IMR-90 (cell line): ENCODE measurements at regions of chr10 and their contacts with region 1.

Region 1: DNA sequence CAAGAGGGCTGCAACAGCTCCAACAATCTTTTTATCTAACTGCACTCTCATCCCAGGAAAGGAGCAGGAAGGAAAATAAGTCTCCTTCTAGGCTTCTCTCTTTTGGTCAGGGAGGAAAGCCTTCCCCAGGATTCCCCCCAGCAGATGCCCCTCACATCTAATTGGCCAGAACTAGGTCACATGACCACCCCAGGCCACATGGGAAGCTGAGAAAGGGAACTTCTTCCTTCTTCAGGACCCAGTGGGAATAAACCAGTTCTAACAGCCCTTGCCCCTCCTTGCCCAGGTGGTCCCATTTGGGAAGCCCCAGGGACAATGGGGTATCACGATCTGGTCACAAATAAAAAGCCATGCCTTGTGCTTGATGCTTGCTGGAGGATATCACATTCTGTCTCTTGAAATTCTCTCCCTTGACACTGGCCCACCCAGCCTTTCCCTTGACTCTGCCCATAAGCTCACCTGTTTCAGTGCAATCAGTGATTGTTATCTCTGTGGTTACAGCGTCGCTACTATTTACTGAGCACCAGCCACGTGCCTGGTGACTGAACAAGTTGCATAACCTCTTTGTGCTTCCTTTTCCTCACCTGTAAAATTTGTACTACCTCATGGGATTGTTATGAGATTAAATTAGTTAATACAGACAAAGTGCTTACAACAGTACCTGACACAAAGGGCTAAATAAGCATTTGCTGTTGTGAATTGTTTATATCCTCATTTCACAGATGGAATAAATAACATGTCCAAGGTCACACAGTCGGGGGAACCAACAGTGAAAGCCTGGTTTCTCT is 9.0 kb upstream of the TACR2 start:
- DNase-seq: no peak
- ATAC-seq: no peak
- H3K4me3 ChIP-seq: no peak overlapping the region
- H3K27ac ChIP-seq: no peak overlapping the region
- H3K4me1 ChIP-seq: peaks cover 5% of the 10 kb centered on the region; the same call in 1 of the 2 replicates
- H3K27me3 ChIP-seq: peaks cover 28% of the 10 kb centered on the region
- CTCF ChIP-seq: no peak
- POLR2A ChIP-seq: no peak
- RAD21 ChIP-seq: no peak

Region 2: DNA sequence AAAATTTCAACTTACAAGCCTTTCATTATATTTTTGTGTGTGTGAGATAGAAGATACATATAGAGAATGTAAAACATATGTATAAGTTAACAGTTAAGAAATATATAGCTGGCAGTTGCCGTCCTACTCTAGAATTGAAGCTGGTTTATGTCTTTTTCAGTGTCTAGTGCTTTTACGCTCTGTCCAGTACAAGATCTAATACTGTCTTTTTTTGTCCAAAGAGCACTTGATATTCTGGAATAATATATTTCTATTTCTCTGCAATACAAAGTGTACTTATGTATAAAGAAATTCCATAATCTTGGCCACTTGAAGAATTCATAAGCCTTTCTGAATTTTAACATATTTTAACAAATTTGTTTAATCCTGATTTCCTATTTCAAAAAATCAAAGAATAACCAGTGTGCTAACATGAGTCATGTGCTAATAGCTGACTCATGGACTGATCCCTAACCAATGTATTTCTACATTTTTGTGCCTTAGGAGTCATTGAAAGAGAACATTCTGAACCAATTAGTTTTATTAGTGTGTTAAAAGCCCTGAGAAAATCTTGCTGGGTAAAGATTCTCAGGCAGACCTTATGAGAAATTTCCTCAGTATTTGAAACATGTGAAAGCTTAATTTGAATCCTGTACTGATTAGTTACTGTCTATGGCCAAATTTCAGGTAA is 777.9 kb before region 1 on chr10:
- CTCF ChIA-PET with region 1: no interaction called
- POLR2A ChIA-PET with region 1: no interaction called
- dilution Hi-C with region 1: no loop called
- in situ Hi-C with region 1: no loop called
- intact Hi-C with region 1: no loop called
- DNase-seq: peak; percentile 89
- ATAC-seq: peak; percentile 95
- H3K4me3 ChIP-seq: no peak overlapping the region
- H3K27ac ChIP-seq: 0 out of 2 replicates have a peak overlapping the region, but pooled peaks have one; percentile 55
- H3K4me1 ChIP-seq: peaks cover 2% of the 10 kb centered on the region; the same call in 1 of the 2 replicates
- H3K27me3 ChIP-seq: no peaks in the 10 kb centered on the region
- CTCF ChIP-seq: no peak
- POLR2A ChIP-seq: no peak
- RAD21 ChIP-seq: no peak

Region 3: DNA sequence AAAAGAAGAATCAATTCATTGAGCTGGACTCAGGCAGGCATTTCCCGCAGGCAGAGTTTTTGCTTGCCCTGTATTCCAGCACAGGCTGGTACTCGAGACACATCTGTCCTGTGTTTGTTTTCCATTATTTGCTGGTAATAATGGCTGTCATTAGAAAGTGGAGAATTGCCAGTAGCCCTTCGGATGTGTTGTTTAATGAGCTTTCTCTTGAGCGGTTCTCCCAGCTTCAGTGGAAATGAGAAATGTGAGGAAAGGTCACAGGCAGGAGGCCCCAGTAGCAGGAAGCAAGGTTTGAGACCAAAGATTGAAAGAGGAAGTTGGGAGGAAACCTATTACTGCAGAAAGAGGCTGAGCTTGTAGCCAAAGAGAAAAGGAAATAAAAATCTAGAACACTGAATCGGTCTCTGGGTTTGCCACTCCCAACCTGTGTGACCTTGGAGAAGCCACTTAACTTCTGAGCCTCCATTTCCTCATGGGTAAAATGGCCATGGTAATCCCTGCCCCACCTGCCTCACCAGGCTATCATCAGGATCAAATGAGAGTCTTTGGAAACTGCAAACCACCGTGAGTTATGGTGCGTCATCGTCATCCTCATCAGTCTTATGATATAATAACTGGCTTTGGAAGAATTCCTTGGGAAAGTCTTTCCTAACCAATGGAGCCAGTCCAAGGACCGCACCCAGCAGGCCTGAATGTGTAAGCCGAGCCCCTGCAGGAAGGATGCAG is 76.7 kb before region 1 on chr10:
- CTCF ChIA-PET with region 1: no interaction called
- POLR2A ChIA-PET with region 1: interaction called, 14 read pairs
- dilution Hi-C with region 1: no loop called
- in situ Hi-C with region 1: no loop called
- intact Hi-C with region 1: no loop called
- DNase-seq: peak; percentile 94
- ATAC-seq: peak; percentile 78
- H3K4me3 ChIP-seq: no peak overlapping the region
- H3K27ac ChIP-seq: no peak overlapping the region
- H3K4me1 ChIP-seq: peaks cover 19% of the 10 kb centered on the region
- H3K27me3 ChIP-seq: no peaks in the 10 kb centered on the region
- CTCF ChIP-seq: no peak
- POLR2A ChIP-seq: no peak
- RAD21 ChIP-seq: no peak

Region 4: GRCh38 chr10:69506834-69507721 is 81.4 kb after region 1 on chr10:
- CTCF ChIA-PET with region 1: interaction called, 3 read pairs
- POLR2A ChIA-PET with region 1: no interaction called
- dilution Hi-C with region 1: no loop called
- in situ Hi-C with region 1: loop called (anchors 5 kb)
- intact Hi-C with region 1: loop called (anchors 1 kb)
- DNase-seq: no peak
- ATAC-seq: no peak
- H3K4me3 ChIP-seq: no peak overlapping the region
- H3K27ac ChIP-seq: no peak overlapping the region
- H3K4me1 ChIP-seq: no peaks in the 10 kb centered on the region
- H3K27me3 ChIP-seq: peaks cover 40% of the 10 kb centered on the region
- CTCF ChIP-seq: no peak
- POLR2A ChIP-seq: no peak
- RAD21 ChIP-seq: no peak

Region 5: DNA sequence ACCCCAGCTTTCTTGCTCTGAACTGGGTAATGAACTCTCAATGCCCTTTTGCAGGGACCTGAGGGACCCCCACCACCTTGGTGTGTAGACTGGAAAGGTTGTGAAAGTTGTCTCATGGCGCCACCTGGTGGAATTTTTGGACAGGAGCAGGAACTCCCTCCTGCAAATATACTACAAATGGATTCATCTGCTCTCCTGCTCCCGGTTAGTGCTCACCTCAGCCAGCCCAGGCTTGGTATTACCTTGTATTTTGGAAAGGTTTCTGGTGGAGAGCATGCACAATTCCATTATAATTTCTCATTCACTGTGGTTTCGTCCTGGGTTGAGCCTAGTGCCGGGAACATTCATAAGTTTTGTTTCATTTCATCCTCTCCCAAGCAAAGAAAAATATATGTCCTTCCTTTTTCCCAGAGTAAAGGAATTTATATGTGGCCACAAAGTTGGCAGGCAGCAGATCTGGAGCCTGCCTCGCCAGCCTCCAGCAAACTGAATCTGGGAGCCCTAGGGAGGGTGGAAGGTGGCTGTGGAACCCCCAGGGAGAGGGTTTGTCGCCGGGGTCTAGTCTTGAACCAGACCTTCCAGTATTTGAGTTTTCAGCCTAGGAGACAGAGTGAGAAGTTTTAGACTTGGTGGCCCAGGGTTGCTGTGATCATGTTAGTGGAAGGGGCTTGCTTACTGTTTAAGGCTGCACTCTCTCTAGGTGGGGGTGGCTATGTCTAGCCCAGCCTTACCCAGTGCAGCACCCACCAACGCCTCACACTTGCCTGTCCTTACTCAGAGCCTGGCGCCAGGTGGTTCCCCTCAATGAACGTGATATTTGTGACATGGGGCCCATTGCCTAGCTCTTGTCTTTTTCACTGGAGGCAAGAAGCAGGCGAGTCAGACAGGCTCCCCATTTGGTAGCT is 213.8 kb after region 1 on chr10:
- CTCF ChIA-PET with region 1: no interaction called
- POLR2A ChIA-PET with region 1: no interaction called
- dilution Hi-C with region 1: no loop called
- in situ Hi-C with region 1: loop called (anchors 10 kb)
- intact Hi-C with region 1: loop called (anchors 5 kb)
- DNase-seq: peak; percentile 56
- ATAC-seq: peak; percentile 87
- H3K4me3 ChIP-seq: no peak overlapping the region
- H3K27ac ChIP-seq: no peak overlapping the region
- H3K4me1 ChIP-seq: no peaks in the 10 kb centered on the region; the same call in 1 of the 2 replicates
- H3K27me3 ChIP-seq: peaks cover 72% of the 10 kb centered on the region
- CTCF ChIP-seq: peak; percentile 81
- POLR2A ChIP-seq: no peak
- RAD21 ChIP-seq: peak; percentile 78